Activated CD4-positive, alpha-beta memory T cell treated with anti-CD3 and anti-CD28 coated beads, Interleukin-2, amount 10 ng/mL, durations not matched to agents 7 days and 5 days (primary cell): ENCODE measurements at regions of chr3 and their contacts with region 1.

Region 1: GRCh38 chr3:142828703-142829305 is 60.1 kb downstream of the PCOLCE2 start:
- DNase-seq: peak; percentile 74
- H3K4me3 Mint-ChIP-seq: no peak overlapping the region
- H3K27ac Mint-ChIP-seq: no peak overlapping the region
- H3K4me1 Mint-ChIP-seq: no peaks in the 10 kb centered on the region
- H3K27me3 Mint-ChIP-seq: peaks cover 19% of the 10 kb centered on the region

Region 2: GRCh38 chr3:142846779-142847577 is 18.2 kb after region 1 on chr3:
- CTCF ChIA-PET with region 1: interaction called, 12 read pairs
- POLR2A ChIA-PET with region 1: no interaction called
- DNase-seq: no peak
- H3K4me3 Mint-ChIP-seq: no peak overlapping the region
- H3K27ac Mint-ChIP-seq: no peak overlapping the region
- H3K4me1 Mint-ChIP-seq: no peaks in the 10 kb centered on the region
- H3K27me3 Mint-ChIP-seq: peaks cover 19% of the 10 kb centered on the region

Region 3: DNA sequence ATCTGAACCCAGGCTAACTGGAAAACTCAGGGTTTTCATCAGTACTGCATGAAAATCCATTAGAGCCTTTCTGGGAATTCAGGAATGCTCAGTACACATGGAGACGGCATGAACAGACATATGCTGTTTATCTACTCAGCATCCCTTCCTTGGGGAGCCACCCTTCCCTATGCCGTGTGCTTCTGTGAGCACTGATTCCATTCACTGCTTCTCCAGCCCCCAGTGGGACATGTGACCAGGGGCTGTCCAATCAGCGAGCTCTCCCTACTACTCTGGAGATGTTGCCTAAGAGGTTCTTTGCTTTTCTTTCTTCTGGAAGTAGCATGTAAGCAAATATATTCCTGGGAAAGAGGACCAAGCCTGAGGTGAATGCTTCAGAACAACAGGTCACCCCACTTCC is 65.7 kb after region 1 on chr3:
- CTCF ChIA-PET with region 1: no interaction called
- POLR2A ChIA-PET with region 1: no interaction called
- DNase-seq: no peak
- H3K4me3 Mint-ChIP-seq: no peak overlapping the region
- H3K27ac Mint-ChIP-seq: no peak overlapping the region
- H3K4me1 Mint-ChIP-seq: peaks cover 1% of the 10 kb centered on the region
- H3K27me3 Mint-ChIP-seq: peaks cover 43% of the 10 kb centered on the region

Region 4: DNA sequence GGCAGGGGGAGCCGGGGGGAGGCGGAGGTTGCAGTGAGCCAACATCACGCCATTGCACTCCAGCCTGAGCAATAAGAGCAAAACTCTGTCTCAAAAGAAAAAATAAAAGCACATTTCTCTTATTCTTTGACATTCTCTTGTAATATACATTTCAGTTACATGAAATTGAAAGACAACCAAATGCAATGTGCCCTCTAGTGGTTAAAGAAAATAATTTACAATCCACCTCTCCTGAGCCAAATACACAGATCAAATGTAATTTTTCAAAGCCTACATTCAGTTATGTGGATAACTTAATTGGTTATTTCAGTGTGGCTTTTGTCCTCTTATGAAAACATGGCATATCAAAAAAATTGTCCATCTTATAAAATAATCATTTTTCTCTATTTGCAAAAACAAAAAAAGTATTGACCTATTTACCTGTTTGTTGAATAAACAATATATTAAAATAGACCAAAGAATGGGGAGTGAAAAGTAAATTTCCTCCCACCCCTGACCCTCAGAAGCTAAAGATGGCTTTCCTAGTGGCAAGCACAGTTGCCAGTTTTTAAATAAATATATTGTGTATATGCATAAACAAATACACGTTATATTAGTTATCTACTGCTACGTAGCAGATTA is 158.4 kb after region 1 on chr3:
- CTCF ChIA-PET with region 1: interaction called, 11 read pairs
- POLR2A ChIA-PET with region 1: no interaction called
- DNase-seq: no peak
- H3K4me3 Mint-ChIP-seq: no peak overlapping the region
- H3K27ac Mint-ChIP-seq: no peak overlapping the region
- H3K4me1 Mint-ChIP-seq: peaks cover 4% of the 10 kb centered on the region
- H3K27me3 Mint-ChIP-seq: peaks cover 22% of the 10 kb centered on the region

Region 5: GRCh38 chr3:142993958-142994442 is 165.2 kb after region 1 on chr3:
- CTCF ChIA-PET with region 1: interaction called, 16 read pairs
- POLR2A ChIA-PET with region 1: no interaction called
- DNase-seq: peak; percentile 71
- H3K4me3 Mint-ChIP-seq: no peak overlapping the region
- H3K27ac Mint-ChIP-seq: no peak overlapping the region
- H3K4me1 Mint-ChIP-seq: peaks cover 4% of the 10 kb centered on the region
- H3K27me3 Mint-ChIP-seq: peaks cover 23% of the 10 kb centered on the region

Region 6: DNA sequence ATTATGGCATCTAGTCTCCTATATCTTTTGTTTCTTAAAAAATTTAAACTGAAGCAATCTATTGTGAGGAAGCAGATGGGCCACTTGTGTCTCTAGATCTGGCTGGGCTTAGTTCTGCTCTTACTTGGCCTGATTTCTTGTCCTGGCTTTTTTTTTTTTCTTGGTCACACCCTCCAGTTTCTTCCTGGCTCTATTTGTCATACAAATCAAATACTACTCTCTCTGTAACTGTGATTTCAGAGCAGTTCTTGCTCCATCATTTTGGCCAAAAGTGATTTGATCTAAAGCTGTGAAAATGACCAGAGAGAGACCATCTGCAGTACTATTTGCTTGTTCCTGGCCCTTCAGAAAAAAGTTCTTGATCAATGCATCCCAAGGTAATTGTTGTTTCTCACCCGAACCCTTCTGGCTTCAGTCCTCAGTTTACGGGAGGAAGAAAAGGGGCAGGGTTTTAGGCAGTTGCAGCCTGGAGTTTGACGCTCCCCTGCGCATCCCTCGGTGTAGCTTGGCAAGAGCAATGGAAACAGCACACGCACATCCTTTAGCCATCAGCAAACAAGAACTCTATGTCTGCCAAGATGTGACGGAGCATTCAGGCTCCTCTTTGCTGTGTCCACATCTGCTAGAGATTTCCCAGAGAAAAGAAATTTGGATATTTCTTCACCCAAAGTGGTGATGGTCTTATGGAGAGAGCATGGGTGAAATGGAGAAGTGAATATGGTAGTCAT is 322.4 kb after region 1 on chr3:
- CTCF ChIA-PET with region 1: no interaction called
- POLR2A ChIA-PET with region 1: no interaction called
- DNase-seq: no peak
- H3K4me3 Mint-ChIP-seq: no peak overlapping the region
- H3K27ac Mint-ChIP-seq: no peak overlapping the region
- H3K4me1 Mint-ChIP-seq: no peaks in the 10 kb centered on the region
- H3K27me3 Mint-ChIP-seq: peaks cover 2% of the 10 kb centered on the region